IMR-90 (cell line): ENCODE measurements at regions of chr2 and their contacts with region 1.

Region 1: GRCh38 chr2:202460119-202460518 is 84.0 kb downstream of the BMPR2 start:
- DNase-seq: no peak
- ATAC-seq: no peak
- H3K4me3 ChIP-seq: no peak overlapping the region
- H3K27ac ChIP-seq: no peak overlapping the region
- H3K4me1 ChIP-seq: no peaks in the 10 kb centered on the region
- H3K27me3 ChIP-seq: no peaks in the 10 kb centered on the region
- CTCF ChIP-seq: no peak
- POLR2A ChIP-seq: no peak
- RAD21 ChIP-seq: no peak

Region 2: DNA sequence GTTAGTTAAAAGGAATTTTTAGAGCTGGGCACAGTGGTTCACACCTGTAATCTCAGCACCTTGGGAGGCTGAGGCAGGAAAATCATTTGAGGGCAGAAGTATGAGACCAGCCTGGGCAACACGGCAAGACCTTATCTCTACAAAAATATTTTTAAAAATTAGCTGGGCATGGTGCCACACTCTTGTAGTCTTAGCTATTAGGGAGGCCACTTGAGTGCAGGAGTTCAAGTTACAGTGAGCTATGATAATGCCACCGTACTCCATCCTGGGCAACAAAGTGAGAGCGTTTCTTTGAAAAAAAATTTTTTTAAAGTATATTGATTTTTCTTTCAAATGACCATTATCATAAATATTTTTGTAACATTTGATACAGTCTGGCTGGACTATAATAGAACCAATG is 81.0 kb after region 1 on chr2:
- CTCF ChIA-PET with region 1: no interaction called
- POLR2A ChIA-PET with region 1: no interaction called
- dilution Hi-C with region 1: no loop called
- in situ Hi-C with region 1: no loop called
- intact Hi-C with region 1: loop called (anchors 10 kb)
- DNase-seq: no peak
- ATAC-seq: no peak; the same call in 1 of the 2 replicates
- H3K4me3 ChIP-seq: no peak overlapping the region
- H3K27ac ChIP-seq: no peak overlapping the region
- H3K4me1 ChIP-seq: no peaks in the 10 kb centered on the region
- H3K27me3 ChIP-seq: no peaks in the 10 kb centered on the region
- CTCF ChIP-seq: no peak
- POLR2A ChIP-seq: no peak
- RAD21 ChIP-seq: no peak